GM18951 (cell line): ENCODE measurements at regions of chr16 and their contacts with region 1.

Region 1: GRCh38 chr16:48632137-48632774 is 22.3 kb upstream of the N4BP1 start:
- POLR2A ChIP-seq: no peak

Region 2: DNA sequence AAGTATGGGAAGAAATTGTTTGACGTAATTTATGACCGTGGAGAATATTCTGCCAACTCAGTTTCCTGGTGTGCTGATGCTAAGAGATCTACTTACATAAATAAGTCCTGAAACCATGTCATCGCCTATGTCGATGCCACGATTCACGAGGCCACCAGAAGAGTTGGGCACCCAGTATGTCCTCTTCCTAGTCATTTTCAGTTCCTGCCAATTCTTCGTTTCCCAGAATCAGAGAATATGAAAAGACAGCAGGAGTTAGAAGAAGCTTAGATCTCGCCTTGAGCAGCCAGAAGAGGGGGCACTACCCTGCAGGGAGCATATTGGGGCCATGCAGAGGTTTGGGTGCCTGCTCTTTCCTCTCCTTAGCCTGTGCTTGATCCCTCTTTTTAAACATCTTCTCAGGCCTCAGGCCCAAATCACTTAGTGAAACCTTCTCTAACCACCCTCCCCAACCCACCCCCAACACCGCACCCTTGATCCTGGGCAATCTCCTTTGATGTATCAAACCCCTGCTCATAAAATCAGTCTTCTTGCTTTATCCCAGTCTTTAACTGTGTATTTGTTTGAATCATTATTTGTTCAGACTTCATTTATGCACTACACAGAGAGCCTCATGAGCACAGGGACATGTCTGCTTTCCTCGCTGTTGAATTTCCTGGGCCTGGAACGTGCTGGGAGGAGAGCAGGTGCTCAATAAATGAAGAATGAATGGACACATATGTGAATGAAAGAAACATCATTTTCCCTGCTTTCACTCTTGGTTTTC is 400.3 kb before region 1 on chr16:
- in situ Hi-C with region 1: loop called (anchors 5 kb)
- POLR2A ChIP-seq: no peak

Region 3: DNA sequence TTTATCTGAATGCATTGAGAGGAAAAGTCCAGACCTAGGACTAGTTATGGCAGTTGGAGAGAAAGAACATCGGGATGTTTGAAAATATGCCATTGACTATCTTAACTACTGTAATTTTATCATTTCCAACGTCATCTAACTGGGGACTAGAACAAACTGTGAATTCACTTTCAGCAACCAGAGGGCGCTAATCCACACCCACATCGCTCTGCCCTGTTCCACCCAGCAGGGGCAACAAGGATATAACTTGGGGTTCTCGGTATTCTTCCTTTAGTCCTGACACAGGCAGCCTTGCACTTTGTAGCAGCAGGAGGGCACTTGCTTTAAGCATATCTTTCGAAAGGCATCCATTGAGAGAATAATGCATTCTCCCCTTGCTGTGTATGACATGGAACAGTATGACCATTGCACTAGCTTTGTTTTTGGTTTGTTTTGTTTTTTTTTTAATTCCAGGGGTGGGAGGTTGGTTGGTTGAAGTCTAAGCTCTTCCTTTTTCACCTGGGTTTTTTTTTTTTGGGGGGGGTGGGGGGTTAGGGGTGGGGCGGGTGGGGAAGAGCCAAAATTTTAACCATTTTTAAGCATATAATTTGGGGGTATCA is 278.6 kb before region 1 on chr16:
- in situ Hi-C with region 1: loop called (anchors 5 kb)
- POLR2A ChIP-seq: no peak

Region 4: GRCh38 chr16:48596326-48596725 is 35.9 kb before region 1 on chr16:
- in situ Hi-C with region 1: no loop called
- POLR2A ChIP-seq: no peak

Region 5: GRCh38 chr16:48704710-48705109 is 72.5 kb after region 1 on chr16:
- in situ Hi-C with region 1: no loop called
- POLR2A ChIP-seq: no peak